Activated CD4-positive, alpha-beta memory T cell treated with anti-CD3 and anti-CD28 coated beads for 36 hours (primary cell): ENCODE measurements at regions of chr6 and their contacts with region 1.

Region 1: GRCh38 chr6:11585426-11586016 is 48.0 kb downstream of the TMEM170B start:
- DNase-seq: no peak
- H3K4me3 Mint-ChIP-seq: no peak overlapping the region
- H3K27ac Mint-ChIP-seq: no peak overlapping the region
- H3K4me1 Mint-ChIP-seq: no peaks in the 10 kb centered on the region
- H3K27me3 Mint-ChIP-seq: peaks cover 10% of the 10 kb centered on the region

Region 2: GRCh38 chr6:11093589-11094410 is 491.7 kb before region 1 on chr6 and contains the start of gene SMIM13:
- CTCF ChIA-PET with region 1: no interaction called
- POLR2A ChIA-PET with region 1: no interaction called
- intact Hi-C with region 1: no loop called
- DNase-seq: peak; percentile 97
- H3K4me3 Mint-ChIP-seq: peak within 1 kb of the TSS; percentile 97
- H3K27ac Mint-ChIP-seq: peak within 1 kb of the TSS; percentile 98
- H3K4me1 Mint-ChIP-seq: peaks cover 27% of the 10 kb centered on the region
- H3K27me3 Mint-ChIP-seq: no peaks in the 10 kb centered on the region
- total RNA-seq, gene SMIM13: 7.2 to 9.5 TPM

Region 3: DNA sequence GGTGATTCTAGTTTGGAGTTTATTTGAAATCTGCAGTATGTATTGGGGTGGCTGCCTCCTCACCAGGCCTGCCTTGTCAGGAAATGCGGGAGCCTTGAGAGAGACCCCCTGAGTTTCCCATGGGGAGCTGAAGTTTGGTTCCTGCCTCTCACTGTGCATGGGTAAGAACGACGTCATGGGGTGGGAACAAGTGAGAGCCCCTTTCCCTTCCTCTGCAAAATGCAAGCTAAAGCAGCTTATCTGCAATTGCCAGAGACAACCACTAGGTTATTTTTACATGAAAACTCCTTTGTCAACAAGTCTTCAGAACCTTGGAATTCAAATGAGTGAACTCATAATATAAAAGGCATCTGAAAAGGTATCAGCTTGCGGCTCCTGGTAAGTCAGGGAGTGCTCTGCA is 10.4 kb after region 1 on chr6:
- CTCF ChIA-PET with region 1: no interaction called
- POLR2A ChIA-PET with region 1: no interaction called
- intact Hi-C with region 1: no loop called
- DNase-seq: no peak
- H3K4me3 Mint-ChIP-seq: no peak overlapping the region
- H3K27ac Mint-ChIP-seq: no peak overlapping the region
- H3K4me1 Mint-ChIP-seq: no peaks in the 10 kb centered on the region
- H3K27me3 Mint-ChIP-seq: no peaks in the 10 kb centered on the region

Region 4: GRCh38 chr6:12605888-12606345 is 1020.4 kb after region 1 on chr6:
- CTCF ChIA-PET with region 1: interaction called, 3 read pairs
- POLR2A ChIA-PET with region 1: no interaction called
- intact Hi-C with region 1: loop called (anchors 5 kb)
- DNase-seq: peak; percentile 47
- H3K4me3 Mint-ChIP-seq: no peak overlapping the region
- H3K27ac Mint-ChIP-seq: no peak overlapping the region
- H3K4me1 Mint-ChIP-seq: no peaks in the 10 kb centered on the region
- H3K27me3 Mint-ChIP-seq: peaks cover 16% of the 10 kb centered on the region

Region 5: DNA sequence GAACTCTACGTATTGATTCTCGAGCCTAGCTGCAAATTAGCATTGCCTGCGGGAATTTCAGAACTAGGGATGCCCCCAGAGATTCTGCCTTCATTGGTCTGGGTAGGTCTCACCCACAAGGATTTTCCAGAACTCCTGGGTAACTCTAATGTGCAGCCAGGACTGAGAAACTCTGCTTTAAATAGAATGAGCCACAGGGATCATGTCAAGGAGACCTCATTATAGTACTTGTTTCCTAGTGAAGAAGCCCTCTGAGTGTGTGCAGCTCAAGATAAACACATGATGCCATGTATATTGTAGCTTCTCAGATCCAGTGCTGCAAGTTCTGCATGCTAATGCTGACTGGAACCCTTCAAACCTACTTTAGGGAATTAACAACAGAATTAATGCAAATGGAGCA is 1310.2 kb after region 1 on chr6:
- CTCF ChIA-PET with region 1: no interaction called
- POLR2A ChIA-PET with region 1: no interaction called
- intact Hi-C with region 1: loop called (anchors 2 kb)
- DNase-seq: no peak
- H3K4me3 Mint-ChIP-seq: no peak overlapping the region
- H3K27ac Mint-ChIP-seq: no peak overlapping the region
- H3K4me1 Mint-ChIP-seq: no peaks in the 10 kb centered on the region
- H3K27me3 Mint-ChIP-seq: peaks cover 19% of the 10 kb centered on the region